ENCODE measurements at regions of chr22 and their contacts with region 1.

Region 1: DNA sequence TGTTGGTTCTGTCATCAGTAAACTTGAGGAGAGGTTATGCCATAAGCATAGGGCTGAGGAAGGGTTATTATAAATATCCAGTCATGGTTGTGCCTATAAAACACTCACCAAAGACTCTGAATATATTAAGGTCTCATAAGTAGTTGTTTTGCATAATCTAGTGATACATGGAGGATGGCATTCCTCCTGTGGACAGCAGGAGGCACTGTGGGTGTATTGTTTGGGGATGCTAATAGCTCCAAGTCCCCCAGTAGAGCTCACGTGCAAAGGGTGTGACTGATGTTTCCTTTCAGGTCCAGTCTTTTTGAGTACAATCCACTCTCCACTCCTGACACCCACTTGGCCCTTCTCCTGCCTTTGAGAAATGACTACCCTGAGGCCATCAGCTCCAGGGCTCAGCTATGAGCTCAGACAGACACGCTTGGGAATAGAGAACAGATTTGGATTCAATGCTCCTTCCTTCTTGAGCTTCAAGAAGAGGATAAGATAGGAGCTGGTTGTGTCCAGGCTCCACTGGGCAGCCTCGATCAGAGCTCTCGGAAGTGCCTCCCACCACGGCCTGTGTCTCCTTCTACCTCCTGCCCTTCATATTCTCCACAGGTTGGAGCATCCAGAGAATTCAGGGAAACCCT is 85.2 kb upstream of the IGLL5 start:
- DNase-seq: peak in 8 of 9 experiments; percentile 37 to 77 (median 58)
- ATAC-seq: peak; percentile 86
- H3K4me3 ChIP-seq: no peak overlapping the region
- H3K4me3 Mint-ChIP-seq: no peak overlapping the region
- H3K27ac ChIP-seq: no peak overlapping the region
- H3K27ac Mint-ChIP-seq: peak overlapping the region; percentile 18
- H3K4me1 ChIP-seq: no peaks in the 10 kb centered on the region
- H3K4me1 Mint-ChIP-seq: peaks cover 48% of the 10 kb centered on the region
- H3K27me3 ChIP-seq: no peaks in the 10 kb centered on the region
- H3K27me3 Mint-ChIP-seq: no peaks in the 10 kb centered on the region
- CTCF ChIP-seq: peak; percentile 80

Region 2: DNA sequence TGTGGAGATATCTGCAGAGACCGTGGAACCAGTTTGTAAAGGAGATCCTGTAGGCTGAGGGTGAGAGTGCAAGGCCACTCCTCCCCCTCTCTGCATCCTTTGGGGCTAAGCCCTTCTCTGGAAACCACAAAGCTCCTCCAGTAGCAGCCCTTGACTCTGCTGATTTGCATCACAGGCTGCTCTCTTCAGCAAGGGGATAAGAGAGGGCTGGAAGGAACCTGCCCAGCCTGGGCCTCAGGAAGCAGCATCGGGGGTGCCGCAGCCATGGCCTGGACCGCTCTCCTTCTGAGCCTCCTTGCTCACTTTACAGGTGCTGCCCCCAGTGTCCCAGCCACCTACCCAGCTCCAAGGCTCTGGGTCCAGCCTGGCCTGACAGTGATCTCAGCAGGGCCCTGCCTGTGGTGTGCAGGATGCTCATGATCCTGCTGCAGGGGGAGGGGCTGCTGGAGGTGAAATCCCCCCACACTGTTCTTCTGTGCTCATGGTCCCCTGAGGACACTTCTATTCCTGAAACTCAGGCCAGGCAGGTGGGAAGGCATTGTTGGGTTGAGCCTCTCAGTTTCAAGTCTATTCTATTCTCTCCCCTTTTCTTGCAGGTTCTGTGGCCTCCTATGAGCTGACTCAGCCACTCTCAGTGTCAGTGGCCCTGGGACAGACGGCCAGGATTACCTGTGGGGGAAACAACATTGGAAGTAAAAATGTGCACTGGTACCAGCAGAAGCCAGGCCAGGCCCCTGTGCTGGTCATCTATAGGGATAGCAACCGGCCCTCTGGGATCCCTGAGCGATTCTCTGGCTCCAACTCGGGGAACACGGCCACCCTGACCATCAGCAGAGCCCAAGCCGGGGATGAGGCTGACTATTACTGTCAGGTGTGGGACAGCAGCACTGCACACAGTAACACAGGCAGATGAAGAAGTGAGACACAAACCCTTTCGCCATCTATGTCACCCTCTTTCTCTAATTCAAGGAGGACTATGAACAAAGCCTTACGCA is 16.7 kb after region 1 on chr22:
- CTCF ChIA-PET with region 1: interaction called, 26 read pairs
- POLR2A ChIA-PET with region 1: interaction called, 5 read pairs
- intact Hi-C with region 1: no loop called
- DNase-seq: peak in 8 of 9 experiments; percentile 23 to 83 (median 56)
- ATAC-seq: peak; percentile 42
- H3K4me3 ChIP-seq: peak overlapping the region; percentile 50 to 51
- H3K4me3 Mint-ChIP-seq: peak overlapping the region; percentile 75
- H3K27ac ChIP-seq: peak overlapping the region; percentile 48 to 80
- H3K27ac Mint-ChIP-seq: peak overlapping the region; percentile 93
- H3K4me1 ChIP-seq: peaks cover 94% of the 10 kb centered on the region
- H3K4me1 Mint-ChIP-seq: peaks cover 98% of the 10 kb centered on the region
- H3K27me3 ChIP-seq: no peaks in the 10 kb centered on the region
- H3K27me3 Mint-ChIP-seq: no peaks in the 10 kb centered on the region
- CTCF ChIP-seq: no peak

Region 3: GRCh38 chr22:22855617-22856308 is 53.3 kb after region 1 on chr22:
- CTCF ChIA-PET with region 1: interaction called, 248 read pairs
- POLR2A ChIA-PET with region 1: no interaction called
- intact Hi-C with region 1: no loop called
- DNase-seq: peak in 8 of 9 experiments; percentile 19 to 69 (median 40)
- ATAC-seq: peak; percentile 49
- H3K4me3 ChIP-seq: no peak overlapping the region
- H3K4me3 Mint-ChIP-seq: no peak overlapping the region
- H3K27ac ChIP-seq: no peak overlapping the region
- H3K27ac Mint-ChIP-seq: no peak overlapping the region
- H3K4me1 ChIP-seq: no peaks in the 10 kb centered on the region
- H3K4me1 Mint-ChIP-seq: peaks cover 1% of the 10 kb centered on the region
- H3K27me3 ChIP-seq: no peaks in the 10 kb centered on the region
- H3K27me3 Mint-ChIP-seq: no peaks in the 10 kb centered on the region
- CTCF ChIP-seq: peak; percentile 35

Region 4: GRCh38 chr22:22870577-22871404 is 68.3 kb after region 1 on chr22:
- CTCF ChIA-PET with region 1: interaction called, 11 read pairs
- POLR2A ChIA-PET with region 1: no interaction called
- intact Hi-C with region 1: no loop called
- DNase-seq: peak in 3 of 9 experiments; percentile 29 to 47 (median 46)
- ATAC-seq: no peak
- H3K4me3 ChIP-seq: no peak overlapping the region
- H3K4me3 Mint-ChIP-seq: no peak overlapping the region
- H3K27ac ChIP-seq: no peak overlapping the region
- H3K27ac Mint-ChIP-seq: no peak overlapping the region
- H3K4me1 ChIP-seq: peaks cover 10% of the 10 kb centered on the region
- H3K4me1 Mint-ChIP-seq: peaks cover 26% of the 10 kb centered on the region
- H3K27me3 ChIP-seq: no peaks in the 10 kb centered on the region
- H3K27me3 Mint-ChIP-seq: no peaks in the 10 kb centered on the region
- CTCF ChIP-seq: no peak

Region 5: DNA sequence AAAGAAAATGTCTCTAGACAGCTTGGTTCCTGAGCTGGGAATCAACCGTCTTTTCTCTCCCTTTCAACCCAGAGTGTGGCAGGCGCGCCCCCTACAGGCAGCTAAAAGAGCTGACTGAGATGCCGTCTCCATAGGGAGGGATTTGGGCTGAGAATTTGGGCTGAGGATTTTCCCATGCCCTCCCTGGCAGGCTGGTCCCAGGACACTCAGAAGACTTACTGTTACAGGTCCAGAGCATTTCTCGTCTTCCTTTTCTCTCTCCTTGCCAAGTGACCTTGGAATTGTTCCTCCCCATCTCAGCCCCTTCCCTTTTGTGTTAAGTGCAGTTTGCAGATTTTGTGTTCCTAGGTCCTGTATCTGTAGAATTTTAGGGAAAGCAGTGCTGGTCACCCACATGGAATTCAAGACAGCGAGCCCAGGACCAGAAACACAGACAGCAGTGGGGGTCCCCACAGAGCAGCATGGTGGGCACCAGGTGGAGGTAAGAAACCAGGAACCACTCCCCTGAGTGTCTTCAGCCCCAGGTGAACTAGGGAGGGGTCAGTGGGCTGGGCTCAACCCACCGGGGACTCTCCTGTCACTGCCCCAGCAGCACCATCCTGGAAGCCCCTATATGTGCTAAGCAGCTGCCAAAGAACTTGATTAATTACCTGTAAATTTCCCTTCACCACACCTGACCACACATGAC is 75.2 kb after region 1 on chr22:
- CTCF ChIA-PET with region 1: interaction called, 281 read pairs
- POLR2A ChIA-PET with region 1: interaction called, 4 read pairs
- intact Hi-C with region 1: loop called (anchors 1 kb)
- DNase-seq: peak; percentile 56 to 91 (median 81)
- ATAC-seq: peak; percentile 59
- H3K4me3 ChIP-seq: no peak overlapping the region
- H3K4me3 Mint-ChIP-seq: no peak overlapping the region
- H3K27ac ChIP-seq: no peak overlapping the region
- H3K27ac Mint-ChIP-seq: peak overlapping the region; percentile 41
- H3K4me1 ChIP-seq: no peaks in the 10 kb centered on the region
- H3K4me1 Mint-ChIP-seq: peaks cover 7% of the 10 kb centered on the region
- H3K27me3 ChIP-seq: no peaks in the 10 kb centered on the region
- H3K27me3 Mint-ChIP-seq: no peaks in the 10 kb centered on the region
- CTCF ChIP-seq: peak; percentile 78

Region 6: GRCh38 chr22:22942511-22943329 is 140.3 kb after region 1 on chr22:
- CTCF ChIA-PET with region 1: interaction called, 4 read pairs
- POLR2A ChIA-PET with region 1: no interaction called
- intact Hi-C with region 1: loop called (anchors 2 to 5 kb)
- DNase-seq: peak; percentile 52 to 83 (median 79)
- ATAC-seq: peak; percentile 78
- H3K4me3 ChIP-seq: no peak overlapping the region
- H3K4me3 Mint-ChIP-seq: no peak overlapping the region
- H3K27ac ChIP-seq: no peak overlapping the region
- H3K27ac Mint-ChIP-seq: peak overlapping the region; percentile 4
- H3K4me1 ChIP-seq: no peaks in the 10 kb centered on the region
- H3K4me1 Mint-ChIP-seq: peaks cover 2% of the 10 kb centered on the region
- H3K27me3 ChIP-seq: no peaks in the 10 kb centered on the region
- H3K27me3 Mint-ChIP-seq: no peaks in the 10 kb centered on the region
- CTCF ChIP-seq: peak; percentile 76

Region 7: GRCh38 chr22:23183061-23183698 is 380.7 kb after region 1 on chr22:
- CTCF ChIA-PET with region 1: no interaction called
- POLR2A ChIA-PET with region 1: no interaction called
- intact Hi-C with region 1: no loop called
- DNase-seq: peak in 1 of 9 experiments; percentile 24
- ATAC-seq: no peak
- H3K4me3 ChIP-seq: peak overlapping the region; percentile 48 to 65
- H3K4me3 Mint-ChIP-seq: peak overlapping the region; percentile 92
- H3K27ac ChIP-seq: peak overlapping the region; percentile 11 to 53
- H3K27ac Mint-ChIP-seq: peak overlapping the region; percentile 58
- H3K4me1 ChIP-seq: peaks cover 49% of the 10 kb centered on the region
- H3K4me1 Mint-ChIP-seq: peaks cover 76% of the 10 kb centered on the region
- H3K27me3 ChIP-seq: no peaks in the 10 kb centered on the region
- H3K27me3 Mint-ChIP-seq: no peaks in the 10 kb centered on the region
- CTCF ChIP-seq: no peak